ENCODE measurements at regions of chr1 and their contacts with region 1.

Region 1: DNA sequence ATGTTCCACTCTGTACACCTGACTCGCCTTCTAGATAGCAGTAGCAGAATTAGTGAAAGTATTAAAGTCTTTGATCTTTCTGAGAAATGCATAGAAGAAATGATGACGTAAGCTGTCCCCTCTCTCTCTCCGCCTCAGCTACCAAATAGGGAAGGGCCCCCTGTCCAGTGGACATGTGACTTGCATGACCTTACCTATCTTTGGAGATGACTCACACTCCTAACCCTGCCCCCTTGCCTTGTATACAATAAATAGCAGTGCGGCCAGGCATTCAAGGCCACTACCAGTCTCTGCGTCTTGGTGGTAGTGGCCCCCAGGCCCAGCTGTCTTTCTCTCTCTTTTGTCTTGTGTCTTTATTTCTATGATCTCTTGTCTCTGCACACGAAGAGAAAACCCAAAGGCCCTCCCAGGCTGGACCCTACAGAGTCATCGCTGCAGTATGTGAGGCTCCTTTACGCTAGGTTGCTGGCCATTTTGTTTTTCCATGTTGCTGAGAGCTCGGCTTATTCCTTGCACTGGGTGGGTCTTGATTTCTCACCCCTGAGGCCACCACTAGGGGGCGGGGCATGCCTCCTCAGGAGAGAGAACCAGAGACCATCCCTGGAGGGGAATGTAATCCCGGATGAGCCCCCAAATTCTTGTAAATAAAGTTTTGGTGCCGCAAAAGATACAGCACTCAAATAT is 16.0 kb upstream of the ZBTB8B start:
- DNase-seq: no peak
- H3K4me3 ChIP-seq: no peak overlapping the region
- H3K27ac ChIP-seq: no peak overlapping the region
- H3K4me1 ChIP-seq: peaks cover 12% of the 10 kb centered on the region
- H3K27me3 ChIP-seq: no peaks in the 10 kb centered on the region
- CTCF ChIP-seq: peak; percentile 28 to 36

Region 2: GRCh38 chr1:32151319-32151787 is 297.6 kb before region 1 on chr1:
- CTCF ChIA-PET with region 1: no interaction called
- dilution Hi-C with region 1: no loop called
- in situ Hi-C with region 1: no loop called
- intact Hi-C with region 1: no loop called
- DNase-seq: peak; percentile 36
- H3K4me3 ChIP-seq: no peak overlapping the region
- H3K27ac ChIP-seq: no peak overlapping the region
- H3K4me1 ChIP-seq: no peaks in the 10 kb centered on the region
- H3K27me3 ChIP-seq: no peaks in the 10 kb centered on the region
- CTCF ChIP-seq: no peak

Region 3: GRCh38 chr1:32172621-32173245 is 276.2 kb before region 1 on chr1:
- CTCF ChIA-PET with region 1: no interaction called
- dilution Hi-C with region 1: no loop called
- in situ Hi-C with region 1: no loop called
- intact Hi-C with region 1: no loop called
- DNase-seq: peak; percentile 54
- H3K4me3 ChIP-seq: no peak overlapping the region
- H3K27ac ChIP-seq: peak overlapping the region; percentile 17
- H3K4me1 ChIP-seq: peaks cover 17% of the 10 kb centered on the region
- H3K27me3 ChIP-seq: no peaks in the 10 kb centered on the region
- CTCF ChIP-seq: no peak

Region 4: DNA sequence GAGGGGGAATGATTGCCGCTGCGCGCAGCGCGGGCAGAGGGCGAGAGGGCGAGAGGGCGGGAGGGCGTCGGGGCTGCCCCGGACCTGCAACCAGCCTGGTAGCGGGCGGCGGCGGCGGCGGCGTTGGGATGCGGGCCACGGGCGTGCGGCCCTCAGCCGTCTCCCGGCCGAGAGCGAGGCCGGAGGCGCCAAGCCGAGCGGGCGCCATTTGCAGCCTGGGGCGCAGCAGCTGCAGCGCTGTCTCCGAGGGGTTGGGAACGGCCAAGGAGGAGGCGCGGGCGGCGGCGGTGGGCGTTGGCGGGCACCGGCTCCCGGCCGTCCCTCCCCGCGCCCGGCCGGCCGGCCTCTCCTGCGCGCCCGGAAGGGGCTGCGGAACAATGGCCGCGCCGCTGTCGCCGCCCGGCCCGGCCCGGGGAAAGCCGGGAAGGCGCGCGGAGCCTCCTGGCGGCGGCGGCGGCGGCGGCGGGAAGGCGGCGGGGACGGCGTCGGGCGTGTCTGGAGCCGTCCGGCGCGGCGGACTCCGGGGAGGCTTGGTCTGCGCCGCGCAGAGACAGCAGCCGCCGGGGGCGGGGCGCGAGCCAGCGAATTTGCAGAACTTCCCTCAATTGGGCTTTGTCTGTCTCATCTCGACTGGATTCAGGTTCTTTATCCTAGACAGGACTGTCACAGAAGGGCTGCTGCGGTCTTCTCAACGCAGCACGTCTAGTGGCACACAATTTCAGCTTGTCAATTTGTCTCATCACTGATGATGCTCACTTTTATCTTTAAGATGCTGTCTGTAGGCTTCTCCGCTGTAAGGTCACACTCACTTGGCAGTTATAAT is 51.7 kb after region 1 on chr1:
- CTCF ChIA-PET with region 1: no interaction called
- dilution Hi-C with region 1: no loop called
- in situ Hi-C with region 1: no loop called
- intact Hi-C with region 1: loop called (anchors 1 kb)
- DNase-seq: peak; percentile 63
- H3K4me3 ChIP-seq: peak overlapping the region; percentile 55 to 78 (median 77)
- H3K27ac ChIP-seq: no peak overlapping the region
- H3K4me1 ChIP-seq: peaks cover 3% of the 10 kb centered on the region
- H3K27me3 ChIP-seq: no peaks in the 10 kb centered on the region
- CTCF ChIP-seq: peak in 1 of 2 donors; percentile 18

Region 5: DNA sequence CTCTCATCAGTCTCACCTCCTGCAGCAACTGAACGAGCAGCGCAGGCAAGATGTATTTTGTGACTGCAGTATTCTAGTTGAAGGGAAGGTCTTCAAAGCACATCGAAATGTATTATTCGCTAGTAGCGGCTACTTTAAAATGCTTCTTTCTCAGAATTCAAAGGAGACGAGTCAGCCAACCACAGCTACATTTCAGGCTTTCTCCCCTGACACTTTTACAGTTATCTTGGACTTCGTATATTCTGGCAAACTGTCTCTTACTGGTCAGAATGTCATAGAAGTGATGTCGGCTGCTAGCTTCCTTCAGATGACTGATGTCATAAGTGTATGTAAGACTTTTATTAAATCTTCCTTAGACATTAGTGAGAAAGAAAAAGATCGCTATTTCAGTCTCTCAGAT is 144.0 kb after region 1 on chr1:
- CTCF ChIA-PET with region 1: no interaction called
- dilution Hi-C with region 1: no loop called
- in situ Hi-C with region 1: no loop called
- intact Hi-C with region 1: loop called (anchors 5 kb)
- DNase-seq: no peak
- H3K4me3 ChIP-seq: no peak overlapping the region
- H3K27ac ChIP-seq: no peak overlapping the region
- H3K4me1 ChIP-seq: no peaks in the 10 kb centered on the region
- H3K27me3 ChIP-seq: no peaks in the 10 kb centered on the region
- CTCF ChIP-seq: no peak

Region 6: DNA sequence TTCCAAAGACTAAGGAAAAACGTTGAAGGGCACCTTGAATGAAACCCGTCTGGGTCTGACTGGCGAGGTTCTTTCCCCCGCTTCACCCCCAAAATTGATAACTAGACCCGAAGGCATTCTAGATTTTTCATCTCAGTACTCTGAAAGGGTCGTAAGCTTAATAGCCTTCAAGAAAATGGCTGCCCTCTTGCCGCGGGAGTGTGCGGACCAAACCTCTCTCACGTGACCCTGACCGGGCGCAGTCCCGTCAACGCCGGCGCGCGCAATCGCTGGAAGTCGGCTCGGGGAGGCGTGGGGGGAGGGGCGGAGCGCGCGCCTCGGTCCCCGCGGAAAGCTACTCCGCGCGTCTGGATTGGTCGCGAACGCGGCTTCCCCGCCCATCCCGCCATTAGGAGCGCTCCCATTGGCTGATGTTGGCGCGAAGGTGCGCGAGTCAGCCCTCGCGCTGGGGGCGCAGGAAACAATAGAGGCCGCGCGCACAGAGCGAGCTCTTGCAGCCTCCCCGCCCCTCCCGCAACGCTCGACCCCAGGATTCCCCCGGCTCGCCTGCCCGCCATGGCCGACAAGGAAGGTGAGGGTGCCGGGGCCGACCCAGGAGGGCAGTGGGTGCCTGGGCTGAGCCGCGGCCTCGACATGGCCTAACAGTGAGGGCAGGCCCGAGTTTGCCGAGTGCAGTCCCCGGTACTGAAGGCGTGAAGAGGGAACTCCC is 202.0 kb after region 1 on chr1 and contains the start of gene RBBP4:
- CTCF ChIA-PET with region 1: no interaction called
- dilution Hi-C with region 1: no loop called
- in situ Hi-C with region 1: no loop called
- intact Hi-C with region 1: loop called (anchors 1 kb)
- DNase-seq: peak; percentile 98
- H3K4me3 ChIP-seq: peak within 1 kb of the TSS; percentile 94 to 99 (median 99)
- H3K27ac ChIP-seq: peak within 1 kb of the TSS; percentile 99
- H3K4me1 ChIP-seq: peaks cover 20% of the 10 kb centered on the region
- H3K27me3 ChIP-seq: no peaks in the 10 kb centered on the region
- CTCF ChIP-seq: no peak
- total RNA-seq, gene RBBP4: 108 to 110 TPM

Region 7: GRCh38 chr1:32870615-32871363 is 421.9 kb after region 1 on chr1 and contains the start of gene FNDC5:
- CTCF ChIA-PET with region 1: no interaction called
- dilution Hi-C with region 1: no loop called
- in situ Hi-C with region 1: no loop called
- intact Hi-C with region 1: loop called (anchors 5 kb)
- DNase-seq: no peak
- H3K4me3 ChIP-seq: peak within 1 kb of the TSS in 2 of 3 experiments; percentile 30 to 40
- H3K27ac ChIP-seq: no peak within 1 kb of the TSS
- H3K4me1 ChIP-seq: no peaks in the 10 kb centered on the region
- H3K27me3 ChIP-seq: peaks cover 8% of the 10 kb centered on the region
- CTCF ChIP-seq: no peak
- total RNA-seq, gene FNDC5: not detected